BJ (cell line): ENCODE measurements at regions of chr10 and their contacts with region 1.

Region 1: GRCh38 chr10:77846718-77847630 is 79.6 kb downstream of the DLG5 start:
- DNase-seq: no peak
- H3K4me3 ChIP-seq: no peak overlapping the region
- H3K27me3 ChIP-seq: no peaks in the 10 kb centered on the region
- CTCF ChIP-seq: peak; percentile 95

Region 2: GRCh38 chr10:77348082-77348481 is 498.9 kb before region 1 on chr10:
- CTCF ChIA-PET with region 1: no interaction called
- POLR2A ChIA-PET with region 1: no interaction called
- DNase-seq: no peak
- H3K4me3 ChIP-seq: no peak overlapping the region
- H3K27me3 ChIP-seq: no peaks in the 10 kb centered on the region
- CTCF ChIP-seq: no peak

Region 3: DNA sequence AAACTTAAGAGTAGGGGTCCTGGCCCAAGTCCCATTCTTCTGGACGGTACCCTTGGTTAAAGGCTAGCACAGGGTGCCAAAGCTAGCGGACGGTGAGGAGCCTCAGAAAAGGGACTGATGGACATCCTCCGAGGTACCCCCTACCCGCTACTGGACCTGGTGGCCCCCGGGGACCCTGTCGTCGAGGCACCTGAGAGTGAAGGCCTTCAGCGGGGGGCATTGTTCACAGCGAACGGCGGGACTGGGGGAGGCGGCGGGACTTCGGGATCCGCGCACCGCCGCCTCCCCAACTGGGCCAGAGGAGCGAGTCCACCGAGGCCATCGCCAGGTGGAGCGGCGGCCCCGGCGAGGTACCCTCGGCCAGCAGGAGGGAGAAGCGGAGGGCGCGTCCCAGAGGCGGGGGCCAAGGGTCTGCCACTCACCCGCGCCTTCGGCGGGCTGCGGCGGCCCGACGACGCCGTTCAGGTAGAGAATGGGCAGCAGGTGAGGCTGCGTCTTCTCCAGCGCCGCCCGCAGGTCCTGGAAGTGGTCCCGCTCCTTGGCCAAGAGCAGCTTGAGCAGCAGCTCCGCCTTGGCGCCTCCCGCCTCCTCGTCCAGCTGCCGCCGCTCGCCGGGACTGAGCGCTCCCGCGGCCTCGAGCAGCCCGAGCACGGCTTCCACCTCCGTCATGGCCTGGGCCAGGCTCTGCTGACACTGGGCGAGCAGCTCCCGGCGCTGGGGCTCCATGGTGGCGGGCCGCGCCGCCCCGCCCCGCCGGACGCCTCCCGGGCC is 79.0 kb after region 1 on chr10:
- CTCF ChIA-PET with region 1: interaction called, 10 read pairs
- POLR2A ChIA-PET with region 1: no interaction called
- DNase-seq: no peak
- H3K4me3 ChIP-seq: peak overlapping the region; percentile 92
- H3K27me3 ChIP-seq: no peaks in the 10 kb centered on the region
- CTCF ChIP-seq: no peak

Region 4: GRCh38 chr10:77970869-77971803 is 124.2 kb after region 1 on chr10:
- CTCF ChIA-PET with region 1: interaction called, 23 read pairs
- POLR2A ChIA-PET with region 1: no interaction called
- DNase-seq: peak; percentile 93
- H3K4me3 ChIP-seq: no peak overlapping the region
- H3K27me3 ChIP-seq: no peaks in the 10 kb centered on the region
- CTCF ChIP-seq: no peak

Region 5: GRCh38 chr10:78004215-78005026 is 157.4 kb after region 1 on chr10:
- CTCF ChIA-PET with region 1: interaction called, 10 read pairs
- POLR2A ChIA-PET with region 1: no interaction called
- DNase-seq: no peak
- H3K4me3 ChIP-seq: no peak overlapping the region
- H3K27me3 ChIP-seq: no peaks in the 10 kb centered on the region
- CTCF ChIP-seq: 0 out of 2 replicates have a peak, but pooled peaks have one; percentile 9

Region 6: GRCh38 chr10:78029269-78030226 is 182.6 kb after region 1 on chr10 and contains the start of gene POLR3A:
- CTCF ChIA-PET with region 1: interaction called, 14 read pairs
- POLR2A ChIA-PET with region 1: no interaction called
- DNase-seq: peak; percentile 81
- H3K4me3 ChIP-seq: peak within 1 kb of the TSS; percentile 99
- H3K27me3 ChIP-seq: no peaks in the 10 kb centered on the region
- CTCF ChIP-seq: peak; percentile 75
- polyA plus RNA-seq, gene POLR3A: 12.1 and 12.7 TPM in 2 replicates